SK-N-SH (cell line): ENCODE measurements at regions of chr11 and their contacts with region 1.

Region 1: DNA sequence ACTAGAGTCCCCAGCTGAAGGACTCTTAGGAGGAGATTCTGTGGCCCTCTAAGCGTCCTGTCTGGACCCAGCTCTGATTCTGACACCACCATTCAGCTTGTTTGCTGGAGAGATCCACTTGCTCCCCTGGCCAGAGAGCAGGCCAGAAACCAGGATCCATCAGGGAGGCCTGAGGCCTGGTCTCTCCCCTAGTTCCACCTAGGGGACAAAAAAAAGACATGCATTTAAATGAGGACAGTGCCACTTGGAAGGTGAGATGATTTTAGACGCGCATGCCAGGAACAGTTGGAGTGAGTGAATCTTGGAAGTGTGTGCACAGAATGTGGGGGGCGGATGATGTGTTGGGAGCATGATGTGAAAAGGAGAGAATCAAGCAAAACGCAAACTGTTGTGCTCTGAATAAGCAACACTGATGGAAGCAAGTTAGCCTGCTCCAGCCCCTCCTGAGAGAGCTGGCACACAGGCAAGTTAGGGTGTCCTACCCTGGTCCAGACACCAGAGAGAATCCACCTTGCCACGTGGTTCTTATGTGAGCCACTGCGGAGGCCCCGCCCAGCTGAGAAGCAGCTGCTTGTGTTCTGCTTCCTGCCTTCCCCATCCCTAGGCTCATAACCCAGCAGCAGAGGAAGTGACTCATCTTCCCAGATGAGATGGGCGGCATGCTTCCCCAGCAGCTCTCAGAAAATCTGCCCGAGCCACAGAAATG is 8.0 kb upstream of the SLCO2B1 start:
- DNase-seq: peak; percentile 63
- H3K4me3 ChIP-seq: no peak overlapping the region
- H3K27ac ChIP-seq: peak overlapping the region; percentile 60 to 61; a peak in 3 of 4 replicates
- H3K4me1 ChIP-seq: peaks cover 10 to 21% of the 10 kb centered on the region in 2 experiments; a peak in 2 of 4 replicates
- H3K27me3 ChIP-seq: no peaks in the 10 kb centered on the region; the same call in 1 of the 2 replicates
- CTCF ChIP-seq: no peak
- EP300 ChIP-seq: no peak; a peak in 1 of 4 replicates
- RAD21 ChIP-seq: no peak; the same call in 1 of the 2 replicates

Region 2: GRCh38 chr11:74923125-74923524 is 219.7 kb before region 1 on chr11:
- CTCF ChIA-PET with region 1: interaction called, 48 read pairs
- POLR2A ChIA-PET with region 1: no interaction called
- DNase-seq: no peak
- H3K4me3 ChIP-seq: no peak overlapping the region
- H3K27ac ChIP-seq: no peak overlapping the region
- H3K4me1 ChIP-seq: no peaks in the 10 kb centered on the region; a peak in 1 of 4 replicates
- H3K27me3 ChIP-seq: no peaks in the 10 kb centered on the region
- CTCF ChIP-seq: no peak
- EP300 ChIP-seq: no peak
- RAD21 ChIP-seq: no peak

Region 3: GRCh38 chr11:75022759-75023396 is 120.0 kb before region 1 on chr11:
- CTCF ChIA-PET with region 1: interaction called, 133 read pairs
- POLR2A ChIA-PET with region 1: interaction called, 3 read pairs
- DNase-seq: peak; percentile 79
- H3K4me3 ChIP-seq: no peak overlapping the region; a peak in 1 of 4 replicates
- H3K27ac ChIP-seq: no peak overlapping the region
- H3K4me1 ChIP-seq: peaks cover 0 to 13% of the 10 kb centered on the region in 2 experiments; a peak in 1 of 4 replicates
- H3K27me3 ChIP-seq: no peaks in the 10 kb centered on the region
- CTCF ChIP-seq: peak; percentile 96
- EP300 ChIP-seq: no peak
- RAD21 ChIP-seq: peak; percentile 95

Region 4: GRCh38 chr11:75160192-75160757 is 17.4 kb after region 1 on chr11:
- CTCF ChIA-PET with region 1: interaction called, 76 read pairs
- POLR2A ChIA-PET with region 1: no interaction called
- DNase-seq: no peak
- H3K4me3 ChIP-seq: no peak overlapping the region
- H3K27ac ChIP-seq: no peak overlapping the region
- H3K4me1 ChIP-seq: no peaks in the 10 kb centered on the region; a peak in 1 of 4 replicates
- H3K27me3 ChIP-seq: peaks cover 6% of the 10 kb centered on the region; the same call in 1 of the 2 replicates
- CTCF ChIP-seq: no peak
- EP300 ChIP-seq: no peak
- RAD21 ChIP-seq: no peak

Region 5: DNA sequence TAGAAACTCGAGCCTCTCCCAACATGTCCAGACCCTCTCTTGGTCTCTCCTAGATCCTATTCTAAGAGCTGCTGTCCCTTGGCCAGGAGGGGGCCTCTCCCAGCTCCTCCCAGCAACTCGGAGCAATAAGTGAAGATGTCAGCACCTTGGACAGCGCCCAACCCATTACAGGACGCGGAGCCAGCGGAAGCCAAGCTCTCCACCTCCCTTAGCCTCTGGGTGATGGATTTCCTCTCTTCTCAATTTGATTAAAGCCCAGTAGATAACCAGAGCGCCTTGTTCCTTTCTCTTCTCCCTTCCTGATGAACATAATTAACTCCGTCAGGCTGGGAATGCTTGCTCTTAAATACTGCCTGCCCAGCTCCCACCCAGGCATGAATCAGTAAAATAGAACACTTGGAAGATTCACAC is 71.5 kb after region 1 on chr11:
- CTCF ChIA-PET with region 1: interaction called, 630 read pairs
- POLR2A ChIA-PET with region 1: interaction called, 4 read pairs
- DNase-seq: peak; percentile 81
- H3K4me3 ChIP-seq: no peak overlapping the region
- H3K27ac ChIP-seq: peak overlapping the region in 1 of 2 experiments; percentile 93; a peak in 2 of 4 replicates
- H3K4me1 ChIP-seq: peaks cover 0 to 11% of the 10 kb centered on the region in 2 experiments; a peak in 2 of 4 replicates
- H3K27me3 ChIP-seq: no peaks in the 10 kb centered on the region
- CTCF ChIP-seq: peak; percentile 58
- EP300 ChIP-seq: peak in 1 of 2 experiments; percentile 84; a peak in 2 of 4 replicates
- RAD21 ChIP-seq: peak; percentile 52

Region 6: GRCh38 chr11:75254326-75254725 is 111.5 kb after region 1 on chr11:
- CTCF ChIA-PET with region 1: interaction called, 1,115 read pairs
- POLR2A ChIA-PET with region 1: interaction called, 3 read pairs
- DNase-seq: no peak
- H3K4me3 ChIP-seq: no peak overlapping the region
- H3K27ac ChIP-seq: no peak overlapping the region
- H3K4me1 ChIP-seq: no peaks in the 10 kb centered on the region; a peak in 1 of 4 replicates
- H3K27me3 ChIP-seq: peaks cover 5% of the 10 kb centered on the region; the same call in 1 of the 2 replicates
- CTCF ChIP-seq: no peak
- EP300 ChIP-seq: no peak
- RAD21 ChIP-seq: no peak